CD8-positive, alpha-beta memory T cell (primary cell): ENCODE measurements at regions of chr20 and their contacts with region 1.

Region 1: DNA sequence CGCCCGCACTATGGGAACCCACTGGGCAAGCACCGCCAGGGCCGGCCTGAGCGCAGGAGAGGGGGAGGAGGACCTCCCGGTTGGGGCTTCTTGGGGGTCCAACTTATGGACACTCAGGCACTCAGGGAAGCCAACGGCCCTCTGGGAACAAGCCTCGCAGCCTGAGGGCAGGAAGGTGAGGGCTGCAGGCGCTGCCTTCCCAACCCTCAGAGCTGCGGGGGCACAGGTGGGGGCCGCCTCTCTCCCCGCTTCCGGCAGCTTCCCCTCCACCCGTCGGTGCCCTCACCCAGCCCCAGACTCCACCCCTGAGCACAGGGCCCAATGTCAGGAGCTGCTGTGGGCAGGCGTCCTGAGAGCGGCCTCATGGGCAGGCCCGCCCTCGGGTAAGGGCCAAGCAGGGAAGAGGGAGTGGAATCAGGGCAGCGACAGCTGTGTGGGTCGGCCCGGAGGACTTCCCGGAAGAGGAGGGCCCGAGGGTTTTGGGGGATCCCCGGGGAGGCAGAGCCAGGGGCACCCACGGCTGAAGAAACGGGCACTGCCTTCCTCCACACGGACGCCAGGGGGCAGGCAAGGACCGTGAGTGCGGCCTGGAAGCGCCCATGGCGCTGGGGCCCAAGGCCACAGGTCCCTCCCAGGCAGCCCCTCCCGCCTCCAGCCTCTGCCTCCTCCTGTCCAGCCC is 488 bp upstream of the PTK6 start:
- DNase-seq: peak; percentile 86 to 95 (median 94)
- H3K4me3 ChIP-seq: peak overlapping the region; percentile 62
- H3K4me3 Mint-ChIP-seq: peak overlapping the region; percentile 36 to 74 (median 69)
- H3K27ac ChIP-seq: peak overlapping the region; percentile 43
- H3K27ac Mint-ChIP-seq: peak overlapping the region; percentile 21 to 75 (median 62)
- H3K4me1 ChIP-seq: peaks cover 23% of the 10 kb centered on the region
- H3K4me1 Mint-ChIP-seq: peaks cover 0 to 18% (median 3%) of the 10 kb centered on the region in 3 donors
- H3K27me3 ChIP-seq: no peaks in the 10 kb centered on the region
- H3K27me3 Mint-ChIP-seq: no peaks in the 10 kb centered on the region

Region 2: GRCh38 chr20:63457737-63458136 is 79.9 kb before region 1 on chr20:
- CTCF ChIA-PET with region 1: no interaction called
- POLR2A ChIA-PET with region 1: no interaction called
- DNase-seq: no peak
- H3K4me3 ChIP-seq: no peak overlapping the region
- H3K4me3 Mint-ChIP-seq: no peak overlapping the region
- H3K27ac ChIP-seq: no peak overlapping the region
- H3K27ac Mint-ChIP-seq: no peak overlapping the region
- H3K4me1 ChIP-seq: no peaks in the 10 kb centered on the region
- H3K4me1 Mint-ChIP-seq: peaks cover 0 to 7% (median 0%) of the 10 kb centered on the region in 3 donors
- H3K27me3 ChIP-seq: no peaks in the 10 kb centered on the region
- H3K27me3 Mint-ChIP-seq: peaks cover 20 to 28% of the 10 kb centered on the region in 2 donors

Region 3: GRCh38 chr20:63520504-63520933 is 17.1 kb before region 1 on chr20 and contains the start of gene PPDPF:
- CTCF ChIA-PET with region 1: interaction called, 24 read pairs
- POLR2A ChIA-PET with region 1: interaction called, 31 read pairs
- DNase-seq: peak; percentile 79 to 89 (median 84)
- H3K4me3 ChIP-seq: peak within 1 kb of the TSS; percentile 70
- H3K4me3 Mint-ChIP-seq: peak within 1 kb of the TSS; percentile 76 to 91 (median 81)
- H3K27ac ChIP-seq: peak within 1 kb of the TSS; percentile 79
- H3K27ac Mint-ChIP-seq: peak within 1 kb of the TSS; percentile 35 to 91 (median 76)
- H3K4me1 ChIP-seq: peaks cover 20% of the 10 kb centered on the region
- H3K4me1 Mint-ChIP-seq: peaks cover 8 to 34% (median 10%) of the 10 kb centered on the region in 3 donors
- H3K27me3 ChIP-seq: no peaks in the 10 kb centered on the region
- H3K27me3 Mint-ChIP-seq: no peaks in the 10 kb centered on the region
- total RNA-seq, gene PPDPF: 207 to 218 TPM

Region 4: DNA sequence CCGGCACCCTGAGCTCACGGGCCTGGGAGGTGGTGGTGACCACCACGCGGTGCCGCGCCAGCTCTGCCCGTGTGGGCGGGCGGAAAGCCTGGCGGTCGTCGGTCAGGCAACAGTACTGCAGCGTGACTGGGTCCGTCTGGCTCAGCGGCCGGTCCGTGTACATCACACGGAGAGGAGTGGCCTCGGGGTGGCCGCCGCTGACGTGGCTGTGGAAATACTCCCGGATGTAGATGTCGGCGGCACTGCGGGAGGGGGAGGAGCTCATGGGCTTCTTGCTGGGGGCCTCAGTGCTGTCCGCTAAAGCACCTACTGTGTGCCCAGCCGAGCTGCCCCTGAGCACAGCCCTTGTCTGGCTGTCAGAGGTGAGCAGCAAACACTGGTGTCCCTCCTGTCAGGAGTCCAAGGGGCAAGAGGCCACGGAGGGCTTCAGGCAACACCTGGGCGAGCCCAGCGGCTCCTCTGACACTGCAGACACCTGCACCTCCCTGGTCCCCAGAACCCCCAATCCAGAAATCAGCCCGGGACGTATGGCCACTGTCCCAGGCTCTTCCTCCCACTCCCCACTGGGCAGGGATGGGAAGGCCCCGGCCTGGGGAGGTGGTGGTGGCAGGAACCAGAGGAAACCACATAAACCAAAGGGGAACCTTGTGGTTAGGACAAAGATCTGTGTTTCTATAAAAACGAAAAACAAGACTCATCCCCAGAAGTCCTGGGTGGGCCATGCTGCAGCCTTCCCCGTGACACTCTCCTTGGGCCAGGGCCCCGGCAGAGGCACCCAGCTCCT is 29.9 kb after region 1 on chr20:
- CTCF ChIA-PET with region 1: interaction called, 27 read pairs
- POLR2A ChIA-PET with region 1: interaction called, 3 read pairs
- DNase-seq: peak; percentile 43 to 73 (median 46)
- H3K4me3 ChIP-seq: peak overlapping the region; percentile 59
- H3K4me3 Mint-ChIP-seq: peak overlapping the region; percentile 51 to 93 (median 77)
- H3K27ac ChIP-seq: no peak overlapping the region
- H3K27ac Mint-ChIP-seq: peak overlapping the region in 7 of 8 donors; percentile 29 to 89 (median 80)
- H3K4me1 ChIP-seq: peaks cover 28% of the 10 kb centered on the region
- H3K4me1 Mint-ChIP-seq: peaks cover 14 to 32% (median 17%) of the 10 kb centered on the region in 3 donors
- H3K27me3 ChIP-seq: no peaks in the 10 kb centered on the region
- H3K27me3 Mint-ChIP-seq: no peaks in the 10 kb centered on the region

Region 5: GRCh38 chr20:63641792-63642544 is 104.3 kb after region 1 on chr20:
- CTCF ChIA-PET with region 1: interaction called, 17 read pairs
- POLR2A ChIA-PET with region 1: interaction called, 14 read pairs
- DNase-seq: peak; percentile 94 to 99 (median 96)
- H3K4me3 ChIP-seq: peak overlapping the region; percentile 82
- H3K4me3 Mint-ChIP-seq: peak overlapping the region; percentile 41 to 95 (median 82)
- H3K27ac ChIP-seq: peak overlapping the region; percentile 79
- H3K27ac Mint-ChIP-seq: peak overlapping the region in 4 of 8 donors; percentile 74 to 96 (median 80)
- H3K4me1 ChIP-seq: peaks cover 25% of the 10 kb centered on the region
- H3K4me1 Mint-ChIP-seq: peaks cover 25 to 38% (median 29%) of the 10 kb centered on the region in 3 donors
- H3K27me3 ChIP-seq: no peaks in the 10 kb centered on the region
- H3K27me3 Mint-ChIP-seq: no peaks in the 10 kb centered on the region

Region 6: DNA sequence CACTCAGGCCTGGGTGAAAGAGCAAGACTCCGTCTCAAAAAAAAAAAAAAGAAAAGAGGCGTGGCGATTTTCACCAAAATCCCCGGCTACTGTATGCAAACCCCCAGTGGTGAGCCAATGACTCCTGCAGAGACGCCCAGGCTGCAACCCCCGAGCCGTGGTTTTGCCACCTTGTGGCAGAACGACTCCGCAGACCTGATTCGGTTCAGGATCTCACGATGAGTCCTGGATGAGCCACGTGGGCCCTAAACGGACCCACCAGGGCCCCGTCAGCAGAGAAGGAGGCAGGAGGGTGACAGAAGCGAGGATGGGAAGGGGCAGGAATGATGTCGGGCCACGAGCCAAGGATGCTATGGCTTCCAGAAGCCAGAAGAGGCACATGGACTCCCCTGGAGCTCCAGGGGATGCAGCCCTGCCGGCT is 244.4 kb after region 1 on chr20:
- CTCF ChIA-PET with region 1: interaction called, 20 read pairs
- POLR2A ChIA-PET with region 1: no interaction called
- DNase-seq: peak; percentile 53 to 88 (median 70)
- H3K4me3 ChIP-seq: no peak overlapping the region
- H3K4me3 Mint-ChIP-seq: peak overlapping the region; percentile 22 to 90 (median 53)
- H3K27ac ChIP-seq: no peak overlapping the region
- H3K27ac Mint-ChIP-seq: peak overlapping the region in 7 of 8 donors; percentile 44 to 89 (median 84)
- H3K4me1 ChIP-seq: peaks cover 17% of the 10 kb centered on the region
- H3K4me1 Mint-ChIP-seq: peaks cover 14 to 20% (median 18%) of the 10 kb centered on the region in 3 donors
- H3K27me3 ChIP-seq: no peaks in the 10 kb centered on the region
- H3K27me3 Mint-ChIP-seq: no peaks in the 10 kb centered on the region

Region 7: DNA sequence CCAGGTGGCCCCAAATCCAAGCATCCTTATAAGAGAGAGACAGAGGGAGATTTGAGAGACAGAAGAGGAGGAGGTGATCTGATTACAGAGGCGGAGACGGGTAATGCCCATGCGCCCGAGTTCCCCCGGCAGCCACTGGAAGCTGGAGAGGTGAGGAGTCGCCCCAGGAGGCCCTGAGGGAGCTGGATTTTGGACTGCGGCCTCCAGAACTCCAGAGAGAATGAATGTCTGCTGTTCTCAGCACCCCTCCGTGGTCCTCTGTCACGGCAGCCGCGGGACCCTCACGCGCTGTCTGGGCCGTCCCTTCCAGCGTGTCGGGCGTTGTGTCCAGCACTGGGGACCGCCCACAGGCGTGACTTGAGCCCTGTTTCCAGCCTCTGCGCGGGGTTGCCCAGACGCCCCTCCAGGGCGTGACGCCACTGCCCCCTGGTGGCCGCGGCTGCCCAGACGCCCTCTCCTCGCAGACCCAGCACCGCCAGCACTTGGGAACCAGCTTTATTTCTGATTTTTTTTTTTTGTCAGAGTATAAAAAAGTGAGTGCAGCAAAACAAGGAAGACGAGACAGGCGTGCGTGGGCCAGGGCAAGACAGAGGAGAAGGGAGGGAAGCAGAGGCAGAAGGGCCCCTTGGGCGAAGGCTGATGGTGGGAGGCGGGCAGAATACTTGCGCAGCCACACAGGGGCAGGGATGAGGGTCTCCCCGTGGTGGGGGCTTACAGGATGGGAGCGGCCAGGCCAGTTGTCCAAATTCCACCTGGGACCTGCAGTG is 436.2 kb after region 1 on chr20:
- CTCF ChIA-PET with region 1: interaction called, 11 read pairs
- POLR2A ChIA-PET with region 1: no interaction called
- DNase-seq: peak; percentile 63 to 78 (median 74)
- H3K4me3 ChIP-seq: no peak overlapping the region
- H3K4me3 Mint-ChIP-seq: peak overlapping the region in 2 of 7 donors; percentile 21 to 87
- H3K27ac ChIP-seq: no peak overlapping the region
- H3K27ac Mint-ChIP-seq: peak overlapping the region in 7 of 8 donors; percentile 39 to 94 (median 53)
- H3K4me1 ChIP-seq: peaks cover 38% of the 10 kb centered on the region
- H3K4me1 Mint-ChIP-seq: peaks cover 30 to 56% (median 43%) of the 10 kb centered on the region in 3 donors
- H3K27me3 ChIP-seq: no peaks in the 10 kb centered on the region
- H3K27me3 Mint-ChIP-seq: no peaks in the 10 kb centered on the region